Heart right ventricle (tissue), 16 donors: ENCODE measurements at regions of chr2 and their contacts with region 1.

Region 1: DNA sequence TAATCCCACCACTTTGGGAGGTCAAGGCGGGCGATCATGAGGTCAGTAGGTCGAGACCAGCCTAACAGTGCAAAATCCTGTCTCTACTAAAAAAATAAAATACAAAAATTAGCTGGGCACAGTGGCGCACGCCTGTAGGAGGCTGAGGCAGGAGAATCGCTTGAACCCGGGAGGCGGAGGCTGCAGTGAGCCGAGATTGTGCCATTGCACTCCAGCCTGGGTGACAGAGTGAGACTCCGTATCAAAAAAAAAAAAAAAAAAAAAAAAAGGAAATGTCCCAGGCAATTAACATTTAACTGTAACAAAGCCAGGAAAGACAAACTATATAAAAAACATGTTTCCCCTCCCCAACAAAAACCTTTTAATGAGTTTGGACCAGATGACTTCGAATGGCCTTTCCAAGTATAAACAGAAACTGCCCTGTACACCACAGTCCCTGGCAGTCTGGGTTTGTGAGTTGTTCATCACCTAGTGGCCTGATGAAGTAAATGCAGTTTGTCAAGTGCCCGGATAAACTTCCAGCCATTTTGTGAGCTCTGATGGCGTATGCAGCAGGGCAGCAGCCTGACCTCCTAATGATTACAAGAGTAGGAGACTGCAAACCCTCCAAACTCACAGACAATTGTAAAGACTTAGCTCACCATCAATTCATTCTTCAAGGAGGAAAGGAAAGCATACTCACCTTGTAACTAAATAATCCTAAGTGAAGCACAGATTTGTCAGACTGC is 16.6 kb upstream of the PCBP1 start:
- DNase-seq: peak; percentile 20 to 86
- ATAC-seq: peak; percentile 93 to 97 (median 97)
- H3K4me3 ChIP-seq: peak overlapping the region in 6 of 10 donors; percentile 2 to 27 (median 10)
- H3K27ac ChIP-seq: peak overlapping the region in 9 of 10 donors; percentile 37 to 88 (median 79)
- H3K4me1 ChIP-seq: peaks cover 0 to 39% (median 11%) of the 10 kb centered on the region in 9 donors
- H3K27me3 ChIP-seq: no peaks in the 10 kb centered on the region
- CTCF ChIP-seq: peak; percentile 74 to 87 (median 82)

Region 2: GRCh38 chr2:69741619-69742466 is 328.9 kb before region 1 on chr2 and contains the start of gene ANXA4:
- intact Hi-C with region 1: loop called in 1 of 10 experiments (anchors 10 kb)
- DNase-seq: peak; percentile 76 to 83
- ATAC-seq: peak; percentile 91 to 96 (median 94)
- H3K4me3 ChIP-seq: peak within 1 kb of the TSS; percentile 71 to 100 (median 91)
- H3K27ac ChIP-seq: peak within 1 kb of the TSS; percentile 81 to 96 (median 94)
- H3K4me1 ChIP-seq: peaks cover 0 to 46% (median 15%) of the 10 kb centered on the region in 9 donors
- H3K27me3 ChIP-seq: no peaks in the 10 kb centered on the region
- CTCF ChIP-seq: no peak
- total RNA-seq, gene ANXA4: 17.9 to 36.7 (median 26.2) TPM

Region 3: GRCh38 chr2:69914170-69914960 is 156.3 kb before region 1 on chr2:
- intact Hi-C with region 1: loop called (anchors 1 to 5 kb)
- DNase-seq: peak; percentile 97 to 100
- ATAC-seq: peak; percentile 94 to 98 (median 96)
- H3K4me3 ChIP-seq: peak overlapping the region; percentile 45 to 95 (median 76)
- H3K27ac ChIP-seq: peak overlapping the region; percentile 80 to 97 (median 96)
- H3K4me1 ChIP-seq: peaks cover 0 to 59% (median 34%) of the 10 kb centered on the region in 9 donors
- H3K27me3 ChIP-seq: no peaks in the 10 kb centered on the region
- CTCF ChIP-seq: peak in 5 of 9 donors; percentile 29 to 53 (median 36)

Region 4: DNA sequence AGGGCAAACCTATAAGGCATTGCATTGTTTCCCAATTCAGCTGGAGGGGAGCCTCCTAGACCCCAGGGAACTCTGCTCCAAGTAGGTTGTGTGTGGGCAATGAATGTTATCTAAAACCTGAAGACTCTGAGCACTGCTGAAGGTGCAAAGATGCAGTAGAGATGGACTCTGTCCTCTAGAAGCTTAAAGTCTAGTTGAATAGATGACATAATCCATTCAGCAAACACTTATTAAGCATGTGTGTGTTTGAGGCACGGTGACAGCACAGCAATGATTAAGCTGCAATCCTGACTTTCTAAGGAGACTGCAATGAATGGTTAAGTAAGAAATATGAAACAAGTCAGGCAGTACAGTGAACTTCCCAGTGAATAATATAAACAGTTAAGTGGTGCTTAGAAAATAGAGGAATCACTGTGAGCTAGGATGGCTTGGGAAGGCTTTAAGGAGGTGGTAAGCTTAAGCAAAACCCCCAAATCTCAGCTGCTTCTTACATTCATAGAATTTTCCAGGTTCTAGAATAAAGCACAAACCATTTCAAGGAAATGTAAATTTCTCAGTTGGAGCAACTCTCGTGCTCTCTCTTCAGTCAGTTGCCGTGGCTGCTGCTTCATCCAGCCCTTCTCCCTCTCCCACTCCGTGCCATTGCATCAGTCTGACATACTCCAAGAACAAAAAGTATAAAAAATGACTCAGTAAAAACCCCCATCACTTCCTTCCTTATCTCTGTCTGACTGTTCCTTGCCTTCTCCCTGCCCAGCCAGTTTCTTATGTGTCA is 136.7 kb before region 1 on chr2:
- intact Hi-C with region 1: loop called in 1 of 10 experiments (anchors 10 kb)
- DNase-seq: no peak
- ATAC-seq: peak in 6 of 8 donors; percentile 44 to 88 (median 62)
- H3K4me3 ChIP-seq: no peak overlapping the region
- H3K27ac ChIP-seq: peak overlapping the region in 3 of 10 donors; percentile 10 to 84 (median 15)
- H3K4me1 ChIP-seq: peaks cover 5 to 64% (median 14%) of the 10 kb centered on the region in 9 donors
- H3K27me3 ChIP-seq: no peaks in the 10 kb centered on the region
- CTCF ChIP-seq: no peak

Region 5: GRCh38 chr2:70009762-70010575 is 60.7 kb before region 1 on chr2:
- intact Hi-C with region 1: loop called in 1 of 10 experiments (anchors 10 kb)
- DNase-seq: no peak
- ATAC-seq: peak in 4 of 8 donors; percentile 19 to 74 (median 40)
- H3K4me3 ChIP-seq: no peak overlapping the region
- H3K27ac ChIP-seq: peak overlapping the region in 1 of 10 donors; percentile 49
- H3K4me1 ChIP-seq: peaks cover 0 to 18% (median 0%) of the 10 kb centered on the region in 9 donors
- H3K27me3 ChIP-seq: no peaks in the 10 kb centered on the region
- CTCF ChIP-seq: no peak

Region 6: DNA sequence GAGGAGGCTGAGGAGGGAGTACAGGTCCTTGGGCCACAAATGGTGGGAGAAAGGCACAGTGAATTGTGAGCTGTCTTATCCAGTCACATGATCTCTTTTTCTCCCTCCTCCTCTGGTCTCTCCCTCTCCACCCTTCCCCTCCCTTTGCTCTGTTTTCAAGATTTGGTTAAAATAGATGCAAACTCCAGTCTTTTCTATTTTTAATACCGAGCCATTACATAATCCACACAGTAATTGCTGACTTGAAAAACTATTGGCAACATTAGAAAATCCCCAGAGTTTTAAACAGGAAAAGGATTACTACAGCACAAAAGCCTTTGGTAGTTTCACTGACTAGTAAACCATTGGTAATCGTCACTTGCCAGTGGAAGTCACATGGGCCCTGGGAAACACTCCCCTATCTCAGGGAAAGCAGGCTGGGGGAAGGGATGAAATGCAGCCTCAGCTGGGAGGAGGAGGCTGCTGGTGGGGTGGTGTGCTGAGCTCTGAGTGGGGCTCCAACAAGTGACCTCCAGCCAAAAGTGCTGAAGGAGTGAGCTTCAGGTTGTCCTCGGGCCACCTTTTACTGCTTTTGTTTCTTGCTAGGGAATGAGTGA is 40.8 kb before region 1 on chr2:
- intact Hi-C with region 1: loop called in 1 of 10 experiments (anchors 5 kb)
- DNase-seq: peak; percentile 35 to 87
- ATAC-seq: peak; percentile 88 to 97 (median 94)
- H3K4me3 ChIP-seq: peak overlapping the region in 1 of 10 donors; percentile 0
- H3K27ac ChIP-seq: peak overlapping the region; percentile 26 to 89 (median 82)
- H3K4me1 ChIP-seq: peaks cover 3 to 33% (median 27%) of the 10 kb centered on the region in 9 donors
- H3K27me3 ChIP-seq: no peaks in the 10 kb centered on the region
- CTCF ChIP-seq: no peak

Region 7: DNA sequence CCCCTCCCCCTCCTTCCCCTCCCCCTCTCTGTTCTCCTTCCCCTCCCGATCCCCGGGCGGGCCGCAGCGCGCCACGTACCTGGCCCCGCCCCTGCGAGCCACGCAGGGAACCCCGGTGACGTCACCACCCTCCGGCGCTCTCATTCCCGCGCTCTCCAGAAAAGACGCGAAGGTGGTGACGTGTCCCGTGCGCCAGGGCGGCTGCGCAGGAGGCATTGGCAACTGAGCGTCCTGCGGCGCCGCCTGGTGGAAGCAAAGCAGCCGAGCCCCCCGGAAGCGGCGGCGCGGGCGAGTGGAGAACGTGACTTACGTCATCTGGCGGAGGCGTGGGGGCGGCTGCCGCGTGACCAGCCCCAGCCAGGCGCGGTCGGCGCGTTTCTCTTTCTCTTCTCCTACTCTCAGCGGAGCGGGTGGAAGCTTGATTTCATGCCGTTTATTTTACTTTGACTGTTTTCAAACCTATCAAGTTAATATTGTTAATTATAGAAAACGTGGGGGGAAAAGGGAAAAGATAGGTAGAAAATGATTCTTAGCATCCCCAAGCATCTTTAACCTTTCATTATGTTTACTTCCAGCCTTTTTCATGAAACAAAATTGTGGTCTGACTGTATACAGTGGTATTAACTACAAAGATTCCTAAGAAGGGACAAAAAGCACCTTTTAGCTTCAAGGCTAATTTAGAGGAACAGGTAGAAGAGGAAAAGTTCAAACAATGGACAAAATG is 72.0 kb after region 1 on chr2:
- intact Hi-C with region 1: loop called in 2 of 10 experiments (anchors 1 to 2 kb)
- DNase-seq: peak; percentile 99 to 100
- ATAC-seq: peak; percentile 88 to 96 (median 92)
- H3K4me3 ChIP-seq: peak overlapping the region; percentile 19 to 75 (median 67)
- H3K27ac ChIP-seq: peak overlapping the region; percentile 93 to 100 (median 100)
- H3K4me1 ChIP-seq: peaks cover 6 to 37% (median 20%) of the 10 kb centered on the region in 9 donors
- H3K27me3 ChIP-seq: no peaks in the 10 kb centered on the region
- CTCF ChIP-seq: peak; percentile 80 to 99 (median 97)

Region 8: GRCh38 chr2:71756280-71756906 is 1685.7 kb after region 1 on chr2:
- intact Hi-C with region 1: no loop called
- DNase-seq: no peak
- ATAC-seq: no peak
- H3K4me3 ChIP-seq: no peak overlapping the region
- H3K27ac ChIP-seq: no peak overlapping the region
- H3K4me1 ChIP-seq: no peaks in the 10 kb centered on the region
- H3K27me3 ChIP-seq: no peaks in the 10 kb centered on the region
- CTCF ChIP-seq: no peak